ENCODE measurements at regions of chr2 and their contacts with region 1.

Region 1: GRCh38 chr2:96413323-96413722 is 77.8 kb downstream of the NCAPH start:
- DNase-seq: peak in 1 of 2 experiments; percentile 26
- H3K4me3 ChIP-seq: no peak overlapping the region
- H3K27ac ChIP-seq: no peak overlapping the region
- H3K4me1 ChIP-seq: peaks cover 48% of the 10 kb centered on the region
- H3K27me3 ChIP-seq: no peaks in the 10 kb centered on the region
- CTCF ChIP-seq: no peak

Region 2: DNA sequence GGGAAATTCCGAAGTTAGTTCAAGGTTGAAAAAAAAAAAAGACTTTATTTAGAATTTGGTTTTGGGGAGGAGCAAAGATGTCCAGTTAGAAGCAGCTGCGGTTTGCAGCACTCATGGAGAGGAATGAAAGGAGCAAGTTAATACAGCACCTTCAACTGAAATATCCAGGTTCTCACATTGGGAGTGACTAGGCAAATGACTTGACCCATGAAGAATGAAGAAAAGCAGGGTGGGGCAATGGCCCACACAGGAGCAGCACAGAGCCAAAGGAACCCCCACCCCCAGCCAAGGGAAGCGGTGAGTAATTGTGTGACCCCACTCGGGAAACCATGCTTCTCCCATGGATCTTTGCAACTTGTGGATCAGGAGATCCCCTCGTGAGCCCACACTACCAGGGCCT is 1173.2 kb before region 1 on chr2:
- CTCF ChIA-PET with region 1: interaction called, 12 read pairs
- POLR2A ChIA-PET with region 1: no interaction called
- intact Hi-C with region 1: no loop called
- DNase-seq: peak; percentile 45 to 56
- H3K4me3 ChIP-seq: no peak overlapping the region
- H3K27ac ChIP-seq: no peak overlapping the region
- H3K4me1 ChIP-seq: no peaks in the 10 kb centered on the region
- H3K27me3 ChIP-seq: no peaks in the 10 kb centered on the region
- CTCF ChIP-seq: no peak

Region 3: DNA sequence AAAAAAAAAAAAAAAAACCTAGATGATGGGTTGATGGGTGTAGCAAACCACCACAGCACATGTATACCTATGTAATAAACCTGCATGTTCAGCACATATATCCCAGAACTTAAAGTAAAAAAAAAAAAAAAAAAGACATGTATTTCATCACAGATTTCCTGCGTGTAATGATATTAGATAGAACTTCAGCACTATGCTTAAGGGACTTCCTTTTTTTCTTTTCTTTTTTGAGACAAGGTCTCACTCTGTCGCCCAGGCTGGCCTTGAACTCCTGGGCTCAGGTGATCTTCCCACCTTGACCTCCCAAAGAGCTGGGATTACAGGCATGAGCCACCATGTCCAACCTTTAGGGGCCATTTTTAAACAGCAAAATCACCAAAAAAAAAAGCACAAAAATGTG is 49.8 kb after region 1 on chr2:
- CTCF ChIA-PET with region 1: no interaction called
- POLR2A ChIA-PET with region 1: no interaction called
- intact Hi-C with region 1: no loop called
- DNase-seq: no peak
- H3K4me3 ChIP-seq: no peak overlapping the region
- H3K27ac ChIP-seq: no peak overlapping the region
- H3K4me1 ChIP-seq: no peaks in the 10 kb centered on the region
- H3K27me3 ChIP-seq: no peaks in the 10 kb centered on the region
- CTCF ChIP-seq: no peak